ENCODE measurements at regions of chr2 and their contacts with region 1.

Region 1: GRCh38 chr2:65064728-65065552 is 8.7 kb downstream of the CEP68 start:
- DNase-seq: peak; percentile 96 to 99 (median 96)
- H3K4me3 ChIP-seq: peak overlapping the region in 1 of 3 experiments; percentile 41
- H3K4me3 Mint-ChIP-seq: peak overlapping the region; percentile 67 to 76
- H3K27ac ChIP-seq: peak overlapping the region; percentile 85 to 92
- H3K27ac Mint-ChIP-seq: peak overlapping the region; percentile 95 to 100 (median 99)
- H3K4me1 ChIP-seq: peaks cover 35 to 38% of the 10 kb centered on the region in 2 donors
- H3K4me1 Mint-ChIP-seq: peaks cover 46% of the 10 kb centered on the region
- H3K27me3 ChIP-seq: no peaks in the 10 kb centered on the region
- H3K27me3 Mint-ChIP-seq: peaks cover 0 to 2% (median 0%) of the 10 kb centered on the region in 3 donors
- CTCF ChIP-seq: peak; percentile 92

Region 2: GRCh38 chr2:65129826-65130663 is 65.1 kb after region 1 on chr2 and contains the start of gene RAB1A:
- intact Hi-C with region 1: loop called (anchors 2 to 5 kb)
- DNase-seq: peak; percentile 99 to 100 (median 100)
- H3K4me3 ChIP-seq: peak within 1 kb of the TSS; percentile 96 to 99 (median 98)
- H3K4me3 Mint-ChIP-seq: peak within 1 kb of the TSS; percentile 96 to 99
- H3K27ac ChIP-seq: peak within 1 kb of the TSS; percentile 96 to 97
- H3K27ac Mint-ChIP-seq: peak within 1 kb of the TSS; percentile 97 to 100 (median 100)
- H3K4me1 ChIP-seq: peaks cover 29 to 38% of the 10 kb centered on the region in 2 donors
- H3K4me1 Mint-ChIP-seq: peaks cover 36% of the 10 kb centered on the region
- H3K27me3 ChIP-seq: no peaks in the 10 kb centered on the region
- H3K27me3 Mint-ChIP-seq: peaks cover 0 to 7% (median 0%) of the 10 kb centered on the region in 3 donors
- CTCF ChIP-seq: no peak
- polyA plus RNA-seq, gene RAB1A: 106 to 124 (median 110) TPM

Region 3: DNA sequence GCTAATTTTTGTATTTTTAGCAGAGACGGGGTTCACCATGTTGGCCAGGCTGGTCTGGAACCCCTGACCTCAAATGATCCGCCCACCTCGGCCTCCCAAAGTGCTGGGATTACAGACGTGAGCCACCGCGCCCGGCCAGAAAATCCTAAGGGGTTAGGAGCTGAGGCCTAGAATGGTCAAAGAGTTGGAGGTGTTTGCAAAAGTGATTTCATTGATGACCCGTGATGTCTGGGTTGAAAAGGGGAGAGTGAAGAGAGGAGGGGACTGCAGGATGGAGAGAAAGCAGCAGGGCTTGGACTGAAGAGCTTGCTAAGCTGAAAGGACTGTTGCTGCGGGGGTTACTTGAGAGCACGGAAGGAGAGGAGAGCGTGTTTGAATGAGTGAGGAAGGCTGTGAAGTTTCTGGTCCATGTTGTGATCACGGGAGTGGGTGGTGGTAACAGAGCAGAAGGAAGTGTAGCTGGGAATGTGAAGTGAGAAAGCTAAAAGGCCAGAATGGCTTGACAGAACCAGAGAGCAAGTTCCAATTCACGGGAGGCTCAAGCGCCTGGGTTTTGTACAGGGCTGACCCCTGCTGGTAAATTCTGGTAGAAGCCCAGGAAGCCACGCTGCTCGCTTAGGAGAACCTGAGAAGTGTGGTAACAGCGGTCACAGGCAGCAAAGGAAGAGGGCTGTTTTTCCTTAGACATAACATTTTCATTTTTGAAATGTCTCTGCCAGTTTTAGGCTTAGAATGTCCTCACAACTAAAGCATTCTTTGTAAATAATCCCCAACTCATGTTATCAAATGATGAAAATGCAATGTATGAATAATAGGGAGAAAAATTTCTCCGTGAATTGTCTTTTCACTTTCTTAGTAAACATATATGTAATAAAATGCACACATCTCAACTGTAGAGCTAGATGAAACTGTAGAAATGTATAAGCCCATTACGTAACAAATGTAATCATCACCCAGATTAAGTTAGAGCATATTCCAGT is 122.2 kb after region 1 on chr2:
- intact Hi-C with region 1: loop called in 1 of 2 experiments (anchors 5 kb)
- DNase-seq: peak; percentile 63 to 74 (median 71)
- H3K4me3 ChIP-seq: peak overlapping the region in 1 of 3 experiments; percentile 5
- H3K4me3 Mint-ChIP-seq: peak overlapping the region; percentile 14 to 32
- H3K27ac ChIP-seq: no peak overlapping the region
- H3K27ac Mint-ChIP-seq: peak overlapping the region in 3 of 7 donors; percentile 1 to 55 (median 6)
- H3K4me1 ChIP-seq: peaks cover 5 to 10% of the 10 kb centered on the region in 2 donors
- H3K4me1 Mint-ChIP-seq: peaks cover 14% of the 10 kb centered on the region
- H3K27me3 ChIP-seq: no peaks in the 10 kb centered on the region
- H3K27me3 Mint-ChIP-seq: peaks cover 2 to 6% (median 5%) of the 10 kb centered on the region in 3 donors
- CTCF ChIP-seq: peak; percentile 81

Region 4: DNA sequence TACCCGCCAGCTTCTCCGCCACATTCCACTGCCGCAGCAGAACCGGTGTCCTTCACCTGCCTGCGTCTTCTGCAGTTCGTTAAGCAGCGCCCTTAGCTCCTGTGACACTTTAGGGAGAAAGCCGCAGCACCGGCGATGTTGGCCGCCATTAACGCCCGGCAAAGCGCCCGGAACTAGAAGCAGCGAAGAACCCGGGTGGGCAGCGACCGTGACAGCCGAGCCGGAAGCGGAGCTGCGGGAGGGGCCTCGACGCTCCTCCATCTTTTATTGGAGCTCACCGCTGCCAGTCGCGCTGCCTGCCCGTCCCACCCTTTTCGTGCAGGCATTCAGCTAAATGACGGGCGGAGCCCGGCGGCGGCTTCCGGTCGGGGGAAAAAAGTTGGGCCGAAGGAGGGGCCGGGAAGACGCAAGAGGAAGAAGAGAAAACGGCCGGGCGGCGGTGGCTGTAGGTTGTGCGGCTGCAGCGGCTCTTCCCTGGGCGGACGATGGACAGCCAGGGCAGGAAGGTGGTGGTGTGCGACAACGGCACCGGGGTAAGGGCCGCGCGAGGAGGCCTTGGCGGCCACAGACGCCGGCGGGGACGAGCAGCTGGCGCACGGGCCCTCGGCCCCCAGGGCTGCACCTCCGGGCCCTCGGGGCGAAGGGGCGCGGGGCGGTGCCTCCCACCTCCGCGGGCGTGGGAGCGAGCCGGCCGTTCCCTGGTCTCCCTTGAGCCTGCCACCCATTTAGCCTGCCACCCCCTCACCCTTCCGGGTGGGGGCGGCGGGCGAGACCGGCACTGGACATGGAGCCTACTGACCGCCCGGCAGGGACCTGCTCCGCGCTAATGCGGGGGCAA is 162.7 kb after region 1 on chr2 and contains the start of gene ACTR2:
- intact Hi-C with region 1: loop called (anchors 5 to 10 kb)
- DNase-seq: peak; percentile 97 to 98 (median 98)
- H3K4me3 ChIP-seq: peak within 1 kb of the TSS; percentile 79 to 92 (median 89)
- H3K4me3 Mint-ChIP-seq: peak within 1 kb of the TSS; percentile 93 to 98
- H3K27ac ChIP-seq: peak within 1 kb of the TSS; percentile 96 to 99
- H3K27ac Mint-ChIP-seq: peak within 1 kb of the TSS; percentile 97 to 100 (median 99)
- H3K4me1 ChIP-seq: peaks cover 38 to 52% of the 10 kb centered on the region in 2 donors
- H3K4me1 Mint-ChIP-seq: peaks cover 35% of the 10 kb centered on the region
- H3K27me3 ChIP-seq: no peaks in the 10 kb centered on the region
- H3K27me3 Mint-ChIP-seq: peaks cover 0 to 6% (median 2%) of the 10 kb centered on the region in 3 donors
- CTCF ChIP-seq: no peak
- polyA plus RNA-seq, gene ACTR2: 88.7 to 560 (median 342) TPM

Measured in CD14-positive monocyte (primary cell).